PC-3 (cell line): ENCODE measurements at regions of chr20 and their contacts with region 1.

Region 1: GRCh38 chr20:46562373-46563169 is 12.1 kb upstream of the OCSTAMP start:
- DNase-seq: peak; percentile 74
- ATAC-seq: peak; percentile 64
- H3K4me3 ChIP-seq: peak overlapping the region; percentile 39; the same call in 1 of the 2 replicates
- H3K27ac ChIP-seq: no peak overlapping the region
- H3K4me1 ChIP-seq: peaks cover 35% of the 10 kb centered on the region
- H3K27me3 ChIP-seq: no peaks in the 10 kb centered on the region
- CTCF ChIP-seq: peak; percentile 94

Region 2: GRCh38 chr20:46681032-46681854 is 118.7 kb after region 1 on chr20:
- CTCF ChIA-PET with region 1: no interaction called
- POLR2A ChIA-PET with region 1: no interaction called
- intact Hi-C with region 1: loop called (anchors 2 kb)
- DNase-seq: peak; percentile 87
- ATAC-seq: peak; percentile 69
- H3K4me3 ChIP-seq: no peak overlapping the region
- H3K27ac ChIP-seq: no peak overlapping the region
- H3K4me1 ChIP-seq: no peaks in the 10 kb centered on the region
- H3K27me3 ChIP-seq: no peaks in the 10 kb centered on the region
- CTCF ChIP-seq: peak; percentile 92